Activated B cell treated with CpG ODN at 0.5 μM for 24 hours (primary cell): ENCODE measurements at regions of chr6 and their contacts with region 1.

Region 1: DNA sequence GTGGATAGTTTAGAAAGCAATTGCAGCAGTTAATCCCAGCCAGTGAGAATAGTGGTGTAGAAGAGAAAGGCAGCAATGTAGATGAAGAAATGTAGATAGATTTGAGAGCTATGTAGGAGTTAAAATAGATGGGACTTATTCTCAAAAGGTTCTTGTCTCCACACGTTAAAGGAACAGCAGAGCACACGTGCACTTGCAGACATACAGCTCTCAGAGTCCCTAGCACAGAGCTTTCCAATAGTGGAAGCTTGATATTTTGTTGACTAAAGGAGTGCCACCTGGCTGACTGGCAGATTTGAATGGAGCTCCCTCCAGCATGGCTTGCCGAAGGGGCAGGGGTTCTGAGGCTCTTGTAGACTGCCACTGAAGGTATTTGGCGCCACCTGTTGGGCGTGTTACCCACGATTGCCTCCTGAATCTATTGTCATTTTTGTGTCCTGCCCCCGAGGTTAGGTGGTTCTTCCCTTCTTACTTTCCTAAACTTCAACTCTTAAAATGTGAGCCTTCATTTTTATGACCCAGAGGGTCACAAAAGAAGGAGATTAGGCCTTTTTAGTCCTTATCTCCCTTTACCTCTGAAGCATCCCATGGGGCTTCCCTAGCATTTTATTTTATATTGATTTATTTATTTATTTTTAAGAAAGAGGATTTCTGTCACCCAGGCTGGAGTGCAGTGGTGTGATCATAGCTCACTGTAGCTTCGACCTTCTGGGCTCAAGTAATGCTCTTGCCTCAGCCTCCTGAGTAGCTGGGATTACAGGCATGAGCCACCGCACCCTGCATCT is 16.4 kb downstream of the BRD2 start:
- DNase-seq: peak; percentile 74
- ATAC-seq: peak; percentile 90
- H3K4me3 Mint-ChIP-seq: no peak overlapping the region
- H3K27ac Mint-ChIP-seq: peak overlapping the region; percentile 73
- H3K4me1 Mint-ChIP-seq: peaks cover 32% of the 10 kb centered on the region
- H3K27me3 Mint-ChIP-seq: no peaks in the 10 kb centered on the region
- CTCF ChIP-seq: no peak

Region 2: DNA sequence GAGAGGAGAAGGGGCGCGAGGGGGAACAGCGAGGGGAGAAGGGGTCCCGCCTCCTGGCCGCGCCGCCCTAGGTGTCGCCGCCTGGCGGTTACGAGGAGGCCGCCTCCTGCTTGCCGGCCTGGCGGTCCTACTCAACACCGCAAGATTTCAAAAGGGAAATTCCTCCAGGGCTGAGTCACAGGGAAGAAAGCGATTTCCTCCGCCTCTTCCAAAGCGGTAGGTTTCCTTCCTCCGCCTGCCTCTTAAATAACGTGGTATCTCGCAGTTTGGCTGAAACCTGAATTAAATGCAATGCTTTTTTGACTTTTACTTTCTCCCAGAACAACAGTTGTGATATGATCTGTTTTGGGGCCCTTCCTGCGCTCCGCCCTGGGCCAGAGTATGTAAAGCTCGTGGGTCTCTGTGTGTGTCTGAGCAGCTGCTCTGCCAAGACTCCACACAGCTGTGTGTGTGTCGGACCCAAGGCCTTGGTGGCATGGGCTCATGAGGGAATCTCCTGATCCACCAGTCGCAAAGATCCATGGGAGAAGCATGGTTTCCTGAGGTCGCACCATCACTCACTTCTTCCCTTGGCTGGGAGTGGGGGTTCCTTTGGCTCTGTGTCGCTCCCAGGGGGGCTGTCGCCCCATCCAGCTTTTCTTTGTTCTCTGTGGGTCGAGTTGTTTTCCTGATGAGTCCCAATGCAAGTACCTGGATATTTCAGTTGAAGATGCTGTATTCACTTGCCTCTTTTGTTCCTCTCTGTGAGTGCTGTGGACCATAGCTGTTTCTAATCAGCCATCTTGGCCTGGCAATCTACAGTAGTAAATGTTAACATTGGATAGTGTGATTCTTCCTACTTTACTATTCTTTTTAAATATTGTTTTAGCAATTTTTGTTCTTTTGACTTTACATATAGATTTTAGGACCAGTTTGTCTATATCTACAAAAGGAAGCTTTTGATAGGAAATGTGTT is 729.3 kb before region 1 on chr6:
- CTCF ChIA-PET with region 1: no interaction called
- POLR2A ChIA-PET with region 1: no interaction called
- intact Hi-C with region 1: no loop called
- DNase-seq: peak; percentile 54
- ATAC-seq: peak; percentile 79
- H3K4me3 Mint-ChIP-seq: peak overlapping the region; percentile 84
- H3K27ac Mint-ChIP-seq: peak overlapping the region; percentile 92
- H3K4me1 Mint-ChIP-seq: peaks cover 77% of the 10 kb centered on the region
- H3K27me3 Mint-ChIP-seq: no peaks in the 10 kb centered on the region
- CTCF ChIP-seq: peak; percentile 39

Region 3: GRCh38 chr6:32825966-32826365 is 158.8 kb before region 1 on chr6:
- CTCF ChIA-PET with region 1: interaction called, 10 read pairs
- POLR2A ChIA-PET with region 1: interaction called, 3 read pairs
- intact Hi-C with region 1: no loop called
- DNase-seq: no peak
- ATAC-seq: no peak
- H3K4me3 Mint-ChIP-seq: no peak overlapping the region
- H3K27ac Mint-ChIP-seq: no peak overlapping the region
- H3K4me1 Mint-ChIP-seq: peaks cover 17% of the 10 kb centered on the region
- H3K27me3 Mint-ChIP-seq: no peaks in the 10 kb centered on the region
- CTCF ChIP-seq: no peak

Region 4: DNA sequence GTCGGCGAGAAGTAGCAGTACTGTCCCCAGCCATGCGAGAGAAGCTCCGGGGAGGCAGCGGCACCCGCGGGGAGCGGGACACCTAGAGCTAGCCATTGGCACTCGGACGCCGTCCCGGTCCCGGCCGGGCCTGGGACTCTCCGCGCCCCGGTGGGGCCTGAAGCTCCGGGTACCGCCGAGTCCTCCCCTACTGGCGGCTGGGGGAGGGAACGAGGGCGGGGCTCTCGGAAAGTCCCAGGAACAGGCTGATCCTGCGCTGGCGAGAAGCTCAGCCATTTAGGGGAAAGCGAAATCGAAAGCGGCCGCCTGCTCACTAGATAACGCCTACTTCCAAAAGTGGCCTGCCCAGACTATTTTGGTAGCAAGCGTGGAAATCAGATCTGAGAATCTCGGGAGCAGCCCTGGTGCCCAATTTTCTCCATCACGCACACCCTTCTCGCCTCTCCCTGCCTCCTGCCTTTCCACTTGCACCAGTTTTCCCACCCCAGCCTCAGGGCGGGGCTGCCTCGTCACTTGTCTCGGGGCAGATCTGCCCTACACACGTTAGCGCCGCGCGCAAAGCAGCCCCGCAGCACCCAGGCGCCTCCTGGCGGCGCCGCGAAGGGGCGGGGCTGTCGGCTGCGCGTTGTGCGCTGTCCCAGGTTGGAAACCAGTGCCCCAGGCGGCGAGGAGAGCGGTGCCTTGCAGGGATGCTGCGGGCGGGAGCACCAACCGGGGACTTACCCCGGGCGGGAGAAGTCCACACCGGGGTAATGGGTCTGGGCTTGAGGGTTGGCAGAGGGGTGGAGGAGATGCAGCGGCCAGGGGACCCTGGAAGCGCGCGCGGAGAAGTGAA is 131.0 kb before region 1 on chr6 and contains the starts of genes PSMB9 and TAP1:
- CTCF ChIA-PET with region 1: interaction called, 17 read pairs
- POLR2A ChIA-PET with region 1: interaction called, 11 read pairs
- intact Hi-C with region 1: no loop called
- DNase-seq: peak; percentile 91
- ATAC-seq: peak; percentile 80
- H3K4me3 Mint-ChIP-seq: peak within 1 kb of the TSS; percentile 99
- H3K27ac Mint-ChIP-seq: peak within 1 kb of the TSS; percentile 98
- H3K4me1 Mint-ChIP-seq: peaks cover 77% of the 10 kb centered on the region
- H3K27me3 Mint-ChIP-seq: no peaks in the 10 kb centered on the region
- CTCF ChIP-seq: peak; percentile 20
- total RNA-seq, gene PSMB9: 198 and 223 TPM in 2 replicates
- total RNA-seq, gene TAP1: 148 and 151 TPM in 2 replicates

Region 5: DNA sequence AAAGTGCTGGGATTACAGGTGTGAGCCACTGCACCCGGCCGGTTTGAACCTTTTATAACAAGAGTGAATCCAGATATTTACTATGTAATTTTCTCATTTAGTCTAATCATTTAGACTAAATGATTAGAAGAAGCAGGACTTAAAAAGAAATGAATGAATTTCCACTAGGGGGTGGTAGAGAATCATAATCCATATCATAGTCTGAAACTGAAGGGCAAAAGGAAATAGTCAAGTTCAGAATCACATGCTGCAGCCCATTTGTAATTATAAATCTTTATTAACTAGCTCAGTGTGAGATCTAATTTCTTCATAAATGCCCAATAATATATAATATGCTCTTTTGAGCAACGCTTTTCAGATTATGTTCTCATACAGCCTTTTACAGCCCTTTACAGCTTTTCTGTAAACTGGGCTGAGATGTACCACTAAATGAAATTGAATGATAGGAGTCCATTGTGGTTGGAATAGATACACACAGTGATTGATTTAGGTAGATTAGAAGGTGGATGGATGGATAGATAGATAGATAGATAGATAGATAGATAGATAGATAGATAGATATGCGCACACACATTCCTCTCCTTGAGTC is 99.0 kb before region 1 on chr6:
- CTCF ChIA-PET with region 1: interaction called, 151 read pairs
- POLR2A ChIA-PET with region 1: interaction called, 24 read pairs
- intact Hi-C with region 1: loop called (anchors 1 kb)
- DNase-seq: no peak
- ATAC-seq: peak; percentile 68
- H3K4me3 Mint-ChIP-seq: no peak overlapping the region
- H3K27ac Mint-ChIP-seq: no peak overlapping the region
- H3K4me1 Mint-ChIP-seq: peaks cover 27% of the 10 kb centered on the region
- H3K27me3 Mint-ChIP-seq: no peaks in the 10 kb centered on the region
- CTCF ChIP-seq: no peak

Region 6: DNA sequence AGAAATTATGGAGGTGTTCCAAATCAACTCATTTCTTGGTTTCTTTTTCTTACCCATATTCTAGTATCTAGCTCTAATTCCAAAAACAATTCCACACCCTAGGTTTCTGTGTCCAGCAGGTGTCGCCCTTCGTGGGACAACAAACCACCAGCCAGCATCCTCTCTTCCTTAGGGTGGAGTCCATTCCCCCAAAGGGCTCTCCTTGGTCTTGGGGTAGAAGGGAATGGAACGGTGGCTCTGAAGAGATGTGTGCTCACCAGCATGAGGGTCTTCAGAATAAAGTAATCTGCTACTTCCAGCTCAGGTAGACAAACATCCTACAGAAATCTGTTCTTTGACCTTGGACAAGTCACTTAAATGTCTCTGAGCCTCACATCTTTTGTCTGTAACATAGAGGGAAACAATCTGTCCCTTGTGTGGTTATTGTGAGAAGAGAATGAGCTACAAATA is 51.1 kb before region 1 on chr6:
- CTCF ChIA-PET with region 1: interaction called, 67 read pairs
- POLR2A ChIA-PET with region 1: interaction called, 39 read pairs
- intact Hi-C with region 1: loop called (anchors 1 kb)
- DNase-seq: peak; percentile 60
- ATAC-seq: peak; percentile 54
- H3K4me3 Mint-ChIP-seq: no peak overlapping the region
- H3K27ac Mint-ChIP-seq: peak overlapping the region; percentile 79
- H3K4me1 Mint-ChIP-seq: peaks cover 92% of the 10 kb centered on the region
- H3K27me3 Mint-ChIP-seq: no peaks in the 10 kb centered on the region
- CTCF ChIP-seq: peak; percentile 65

Region 7: DNA sequence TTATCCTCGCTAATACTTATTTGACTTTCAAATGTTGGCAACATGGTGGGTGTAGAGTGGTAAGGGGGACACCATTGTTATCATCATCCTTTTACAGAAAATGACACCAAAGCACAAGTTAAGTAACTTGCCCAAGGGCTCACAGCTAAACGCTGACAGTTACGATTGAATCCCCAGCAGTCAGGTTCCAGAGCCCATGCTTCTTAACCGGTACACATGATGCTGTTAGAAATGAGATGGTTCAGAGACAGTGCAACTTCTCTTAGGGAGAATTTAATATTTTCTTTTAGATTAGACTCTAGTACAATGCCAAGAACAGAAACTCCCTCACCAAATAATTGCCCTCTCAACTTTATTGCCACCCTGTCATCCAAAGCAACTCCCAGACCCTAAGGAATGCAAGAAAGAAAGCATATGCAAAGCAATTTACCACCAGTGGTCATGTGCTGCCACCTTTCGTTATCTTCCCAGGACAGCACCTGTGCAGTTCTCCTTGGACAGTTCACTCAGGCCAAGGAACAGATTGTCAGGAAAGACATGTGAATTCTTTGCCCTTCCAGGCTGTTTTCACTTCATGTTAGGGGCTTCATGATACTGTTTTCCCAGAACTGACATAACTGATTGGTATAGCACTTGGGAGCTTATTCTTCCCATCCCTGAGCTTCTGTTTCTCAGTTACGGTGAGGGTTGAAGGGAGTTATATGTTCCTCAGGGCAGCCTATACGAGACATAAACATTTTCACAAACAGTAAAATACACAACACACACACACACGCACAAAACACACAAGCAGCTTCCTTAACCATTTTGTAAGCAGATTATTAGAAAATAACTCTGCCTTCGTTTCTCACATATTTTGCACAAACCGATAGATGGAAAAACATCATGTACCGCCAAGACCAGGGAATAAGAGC is 37.0 kb before region 1 on chr6:
- CTCF ChIA-PET with region 1: interaction called, 90 read pairs
- POLR2A ChIA-PET with region 1: interaction called, 57 read pairs
- intact Hi-C with region 1: loop called (anchors 1 kb)
- DNase-seq: no peak
- ATAC-seq: no peak
- H3K4me3 Mint-ChIP-seq: peak overlapping the region; percentile 98
- H3K27ac Mint-ChIP-seq: peak overlapping the region; percentile 99
- H3K4me1 Mint-ChIP-seq: peaks cover 94% of the 10 kb centered on the region
- H3K27me3 Mint-ChIP-seq: no peaks in the 10 kb centered on the region
- CTCF ChIP-seq: no peak

Region 8: DNA sequence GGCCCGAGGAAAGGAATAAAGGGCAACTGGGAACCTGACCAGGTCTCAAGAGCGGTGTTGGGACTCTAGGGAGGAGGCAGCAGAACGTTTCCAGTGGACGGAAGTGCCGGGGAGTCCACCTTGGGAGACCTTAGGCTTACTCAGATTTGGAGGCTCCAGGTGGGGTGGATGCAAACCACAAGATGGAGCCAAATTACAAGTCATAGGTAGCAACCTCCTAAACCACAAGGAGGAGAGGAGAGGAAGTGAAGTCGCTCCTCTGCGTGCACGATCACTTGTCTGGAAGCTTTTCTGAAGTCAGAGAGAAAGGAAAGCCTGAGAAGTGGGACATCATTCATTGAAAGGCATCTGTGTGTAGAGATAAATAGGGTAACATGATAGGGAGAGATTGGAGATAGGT is 15.3 kb after region 1 on chr6:
- CTCF ChIA-PET with region 1: interaction called, 10 read pairs
- POLR2A ChIA-PET with region 1: interaction called, 3 read pairs
- intact Hi-C with region 1: no loop called
- DNase-seq: no peak
- ATAC-seq: peak; percentile 92
- H3K4me3 Mint-ChIP-seq: peak overlapping the region; percentile 47
- H3K27ac Mint-ChIP-seq: peak overlapping the region; percentile 79
- H3K4me1 Mint-ChIP-seq: peaks cover 12% of the 10 kb centered on the region
- H3K27me3 Mint-ChIP-seq: no peaks in the 10 kb centered on the region
- CTCF ChIP-seq: no peak

Region 9: GRCh38 chr6:34514593-34515472 is 1530.0 kb after region 1 on chr6:
- CTCF ChIA-PET with region 1: no interaction called
- POLR2A ChIA-PET with region 1: no interaction called
- intact Hi-C with region 1: no loop called
- DNase-seq: no peak
- ATAC-seq: no peak
- H3K4me3 Mint-ChIP-seq: no peak overlapping the region
- H3K27ac Mint-ChIP-seq: no peak overlapping the region
- H3K4me1 Mint-ChIP-seq: no peaks in the 10 kb centered on the region
- H3K27me3 Mint-ChIP-seq: peaks cover 6% of the 10 kb centered on the region
- CTCF ChIP-seq: no peak